GM12878 (cell line): ENCODE measurements at regions of chr3 and their contacts with region 1.

Region 1: DNA sequence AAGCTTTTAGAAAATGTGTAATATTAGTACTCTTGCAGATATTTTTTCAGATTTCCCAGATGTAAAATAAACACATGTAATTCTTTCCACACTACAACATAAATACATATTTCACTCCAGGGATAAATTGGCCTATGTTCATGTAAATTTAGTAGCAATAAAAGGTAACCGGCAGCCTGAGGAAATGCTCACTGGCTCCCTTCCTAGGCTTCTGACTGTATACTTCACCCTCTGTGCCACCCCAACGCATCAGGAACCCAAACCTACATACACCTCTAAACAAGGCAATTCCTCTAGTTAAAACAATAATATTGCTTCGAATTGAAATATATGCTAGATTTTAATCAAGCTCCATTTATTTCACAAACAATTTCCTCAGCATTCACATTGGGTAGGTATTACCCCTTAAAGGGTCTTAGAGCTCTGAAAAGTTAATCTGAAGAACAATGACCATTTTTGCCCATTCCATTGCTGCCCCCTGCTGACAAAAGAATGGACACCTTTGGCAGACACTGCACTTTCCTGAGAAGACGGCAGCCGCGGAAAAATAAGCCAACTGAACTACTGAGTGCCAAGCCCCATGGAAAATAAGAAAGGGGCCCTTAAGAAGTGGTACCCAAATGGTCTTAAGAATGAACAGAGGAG is 212.5 kb downstream of the OSBPL10 start:
- DNase-seq: no peak
- ATAC-seq: peak; percentile 74
- H3K4me3 ChIP-seq: no peak overlapping the region
- H3K27ac ChIP-seq: no peak overlapping the region
- H3K4me1 ChIP-seq: no peaks in the 10 kb centered on the region
- H3K27me3 ChIP-seq: no peaks in the 10 kb centered on the region; a peak in 1 of 4 replicates
- CTCF ChIP-seq: peak; percentile 35 to 68 (median 56); a peak in 5 of 6 replicates
- EP300 ChIP-seq: no peak
- POLR2A ChIP-seq: no peak
- RAD21 ChIP-seq: peak; percentile 82

Region 2: GRCh38 chr3:30768703-30769685 is 999.6 kb before region 1 on chr3:
- CTCF ChIA-PET with region 1: interaction called, 21 read pairs
- POLR2A ChIA-PET with region 1: no interaction called
- RAD21 ChIA-PET with region 1: interaction called, 3 read pairs
- SMC1A ChIA-PET with region 1: interaction called, 11 read pairs
- in situ Hi-C with region 1: no loop called
- intact Hi-C with region 1: loop called (anchors 1 kb)
- DNase-seq: no peak
- ATAC-seq: peak; percentile 75
- H3K4me3 ChIP-seq: no peak overlapping the region
- H3K27ac ChIP-seq: no peak overlapping the region
- H3K4me1 ChIP-seq: no peaks in the 10 kb centered on the region
- H3K27me3 ChIP-seq: no peaks in the 10 kb centered on the region; a peak in 2 of 4 replicates
- CTCF ChIP-seq: peak; percentile 77
- EP300 ChIP-seq: no peak
- POLR2A ChIP-seq: no peak
- RAD21 ChIP-seq: peak; percentile 82

Region 3: GRCh38 chr3:31137718-31138465 is 630.7 kb before region 1 on chr3:
- CTCF ChIA-PET with region 1: no interaction called
- POLR2A ChIA-PET with region 1: no interaction called
- RAD21 ChIA-PET with region 1: no interaction called
- SMC1A ChIA-PET with region 1: no interaction called
- in situ Hi-C with region 1: no loop called
- intact Hi-C with region 1: loop called (anchors 5 kb)
- DNase-seq: no peak
- ATAC-seq: no peak
- H3K4me3 ChIP-seq: no peak overlapping the region
- H3K27ac ChIP-seq: no peak overlapping the region
- H3K4me1 ChIP-seq: no peaks in the 10 kb centered on the region
- H3K27me3 ChIP-seq: no peaks in the 10 kb centered on the region
- CTCF ChIP-seq: no peak
- EP300 ChIP-seq: no peak
- POLR2A ChIP-seq: no peak
- RAD21 ChIP-seq: no peak

Region 4: DNA sequence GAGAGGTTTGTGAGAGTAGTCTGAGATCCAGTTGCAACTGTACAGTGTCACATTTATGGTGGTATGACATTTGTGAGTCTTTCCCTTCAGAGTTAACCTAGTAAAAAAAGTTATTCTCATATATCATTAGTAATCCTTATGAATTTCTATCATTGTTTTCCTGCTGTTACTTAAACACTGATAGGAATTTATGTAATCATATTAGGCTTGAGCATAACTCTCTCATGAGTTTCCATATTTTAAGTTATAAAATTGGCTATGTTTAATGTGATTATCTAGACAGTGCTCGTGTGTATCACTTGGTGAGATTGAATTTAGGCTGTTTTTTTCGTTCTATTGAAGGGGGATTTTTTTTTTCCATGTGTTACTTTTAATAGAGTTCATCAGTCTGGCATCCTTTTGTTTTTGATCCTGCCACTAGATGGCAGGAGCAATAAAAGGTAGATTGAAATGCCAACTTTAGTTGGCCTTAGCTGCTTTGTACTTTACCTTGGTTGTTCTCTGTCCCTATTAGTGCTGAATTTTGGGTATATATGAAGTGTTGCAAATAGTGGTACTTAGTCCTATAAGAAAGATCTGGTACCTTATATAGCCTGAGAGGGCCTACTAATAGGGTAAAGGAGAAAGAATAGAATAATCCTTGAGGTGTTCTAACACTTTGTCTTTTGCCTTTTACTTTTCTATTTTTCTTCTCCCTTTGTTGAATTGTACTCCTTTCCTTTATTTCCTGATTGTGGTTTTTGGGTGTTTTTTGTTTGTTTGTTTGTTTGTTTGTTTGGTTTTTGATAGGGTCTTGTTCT is 217.9 kb before region 1 on chr3:
- CTCF ChIA-PET with region 1: no interaction called
- POLR2A ChIA-PET with region 1: no interaction called
- RAD21 ChIA-PET with region 1: interaction called, 4 read pairs
- SMC1A ChIA-PET with region 1: interaction called, 4 read pairs
- in situ Hi-C with region 1: no loop called
- intact Hi-C with region 1: loop called (anchors 5 kb)
- DNase-seq: no peak
- ATAC-seq: peak; percentile 71
- H3K4me3 ChIP-seq: no peak overlapping the region
- H3K27ac ChIP-seq: no peak overlapping the region
- H3K4me1 ChIP-seq: no peaks in the 10 kb centered on the region
- H3K27me3 ChIP-seq: no peaks in the 10 kb centered on the region
- CTCF ChIP-seq: peak; percentile 48 to 62 (median 49); a peak in 5 of 6 replicates
- EP300 ChIP-seq: no peak
- POLR2A ChIP-seq: no peak
- RAD21 ChIP-seq: peak; percentile 51

Region 5: GRCh38 chr3:31622636-31623288 is 145.8 kb before region 1 on chr3:
- CTCF ChIA-PET with region 1: no interaction called
- POLR2A ChIA-PET with region 1: no interaction called
- RAD21 ChIA-PET with region 1: no interaction called
- SMC1A ChIA-PET with region 1: no interaction called
- in situ Hi-C with region 1: no loop called
- intact Hi-C with region 1: loop called (anchors 5 kb)
- DNase-seq: peak; percentile 41
- ATAC-seq: peak; percentile 80
- H3K4me3 ChIP-seq: no peak overlapping the region
- H3K27ac ChIP-seq: peak overlapping the region; percentile 0; the same call in 1 of the 2 replicates
- H3K4me1 ChIP-seq: peaks cover 25% of the 10 kb centered on the region
- H3K27me3 ChIP-seq: no peaks in the 10 kb centered on the region
- CTCF ChIP-seq: no peak
- EP300 ChIP-seq: peak; percentile 84 to 85
- POLR2A ChIP-seq: no peak
- RAD21 ChIP-seq: no peak